Keratinocyte (primary cell): ENCODE measurements at regions of chr15 and their contacts with region 1.

Region 1: DNA sequence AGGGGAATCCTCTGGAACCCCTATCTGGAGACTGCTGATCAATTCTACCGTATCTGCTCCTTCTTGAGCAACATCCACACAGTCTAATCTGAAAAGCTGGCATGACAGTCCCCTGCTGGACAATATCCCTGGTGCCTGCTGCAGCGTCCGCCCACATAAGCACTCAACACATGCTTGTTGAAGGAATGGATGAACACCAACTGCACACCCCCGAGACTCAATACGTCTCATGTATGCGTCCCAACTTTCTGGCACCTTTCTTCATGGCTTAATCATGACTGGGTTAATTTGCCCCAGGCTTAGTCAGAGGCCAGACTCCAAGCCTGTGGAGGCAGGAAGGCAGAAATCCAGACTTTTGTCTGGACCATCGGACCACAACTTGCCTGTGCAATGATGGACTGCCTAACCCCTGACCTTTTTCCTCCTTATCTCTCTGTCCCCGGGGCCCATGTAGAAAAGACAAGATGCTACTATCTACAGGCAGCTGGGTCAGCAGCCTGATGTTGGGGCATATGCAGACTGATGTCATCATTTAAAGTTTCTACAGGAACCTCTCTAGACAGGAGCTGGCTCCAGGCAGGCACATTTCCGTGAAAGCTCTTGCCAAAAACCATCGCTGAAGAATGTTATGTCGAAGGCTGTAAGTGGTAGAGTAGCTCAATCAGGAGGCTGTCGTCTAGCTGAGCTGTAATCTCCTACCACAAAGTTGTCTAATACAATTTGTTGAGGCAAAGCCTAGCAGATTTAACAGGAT is 114.1 kb upstream of the TPM1 start:
- DNase-seq: peak; percentile 95
- H3K4me3 ChIP-seq: peak overlapping the region in 1 of 3 experiments; percentile 18
- H3K27ac ChIP-seq: peak overlapping the region; percentile 93
- H3K4me1 ChIP-seq: peaks cover 22% of the 10 kb centered on the region
- H3K27me3 ChIP-seq: no peaks in the 10 kb centered on the region
- CTCF ChIP-seq: peak; percentile 27 to 33 (median 31)

Region 2: GRCh38 chr15:62868507-62868906 is 59.9 kb before region 1 on chr15:
- dilution Hi-C with region 1: loop called (anchors 10 kb)
- DNase-seq: no peak
- H3K4me3 ChIP-seq: no peak overlapping the region
- H3K27ac ChIP-seq: no peak overlapping the region
- H3K4me1 ChIP-seq: no peaks in the 10 kb centered on the region
- H3K27me3 ChIP-seq: no peaks in the 10 kb centered on the region
- CTCF ChIP-seq: no peak

Region 3: GRCh38 chr15:62995047-62995674 is 66.7 kb after region 1 on chr15:
- dilution Hi-C with region 1: loop called (anchors 10 kb)
- DNase-seq: no peak
- H3K4me3 ChIP-seq: no peak overlapping the region
- H3K27ac ChIP-seq: no peak overlapping the region
- H3K4me1 ChIP-seq: peaks cover 2% of the 10 kb centered on the region
- H3K27me3 ChIP-seq: no peaks in the 10 kb centered on the region
- CTCF ChIP-seq: no peak